ENCODE measurements at regions of chr17 and their contacts with region 1.

Region 1: DNA sequence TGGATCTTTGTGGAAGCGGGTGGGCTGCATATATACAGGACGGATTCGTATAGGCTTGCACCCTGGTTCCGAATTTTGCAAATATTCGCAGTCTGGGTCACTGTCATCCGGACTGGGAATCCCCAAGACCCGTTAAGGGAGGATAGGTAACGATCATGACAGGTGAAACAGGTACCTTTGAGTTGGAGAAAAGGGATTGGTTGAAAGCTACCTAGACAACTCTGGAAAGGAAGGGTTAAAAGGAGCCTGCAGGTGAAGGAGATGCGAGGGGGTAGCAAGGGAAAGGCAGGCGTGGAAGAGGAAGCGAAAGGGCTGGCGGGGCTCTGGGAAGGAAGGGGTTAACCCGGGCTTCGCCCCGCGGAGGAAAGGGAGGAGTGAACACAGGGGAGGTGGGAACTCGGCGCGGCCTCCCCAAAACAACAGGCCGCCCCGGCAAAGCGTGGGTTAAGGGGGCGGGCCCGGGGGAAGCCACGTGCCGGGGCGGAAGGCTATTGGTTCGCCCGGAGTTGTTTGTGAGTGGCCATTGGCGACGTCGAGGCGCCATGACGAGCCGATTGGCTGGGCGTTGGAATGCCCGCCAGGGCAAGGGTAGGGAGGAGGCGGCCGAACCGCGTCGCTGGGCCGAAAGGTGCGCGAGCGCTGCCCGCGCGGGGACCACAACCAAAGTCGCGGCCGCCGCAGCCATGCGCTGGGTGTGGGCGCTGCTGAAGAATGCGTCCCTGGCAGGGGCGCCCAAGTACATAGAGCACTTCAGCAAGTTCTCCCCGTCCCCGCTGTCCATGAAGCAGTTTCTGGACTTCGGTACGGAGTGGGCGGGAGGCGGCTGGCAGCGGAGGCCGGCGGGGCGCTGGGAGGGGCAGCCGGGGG is at the start of gene PDK2:
- DNase-seq: peak; percentile 95 to 96
- ATAC-seq: peak; percentile 79 to 83
- H3K4me3 ChIP-seq: peak within 1 kb of the TSS; percentile 86 to 97 (median 90)
- H3K27ac ChIP-seq: peak within 1 kb of the TSS; percentile 96 to 99 (median 98)
- H3K4me1 ChIP-seq: peaks cover 43 to 47% of the 10 kb centered on the region in 2 donors
- H3K27me3 ChIP-seq: no peaks in the 10 kb centered on the region
- CTCF ChIP-seq: no peak
- POLR2A ChIP-seq: peak; percentile 93 to 95
- total RNA-seq, gene PDK2: 111 to 335 (median 124) TPM

Region 2: GRCh38 chr17:49880291-49881053 is 214.5 kb before region 1 on chr17:
- in situ Hi-C with region 1: no loop called
- intact Hi-C with region 1: no loop called
- DNase-seq: peak; percentile 28 to 44
- ATAC-seq: peak; percentile 64 to 80
- H3K4me3 ChIP-seq: no peak overlapping the region
- H3K27ac ChIP-seq: no peak overlapping the region
- H3K4me1 ChIP-seq: no peaks in the 10 kb centered on the region
- H3K27me3 ChIP-seq: peaks cover 22 to 27% (median 24%) of the 10 kb centered on the region in 3 donors
- CTCF ChIP-seq: peak; percentile 80 to 97 (median 91)
- POLR2A ChIP-seq: no peak

Region 3: GRCh38 chr17:50013079-50013478 is 81.9 kb before region 1 on chr17:
- in situ Hi-C with region 1: no loop called
- intact Hi-C with region 1: no loop called
- DNase-seq: no peak
- ATAC-seq: no peak
- H3K4me3 ChIP-seq: no peak overlapping the region
- H3K27ac ChIP-seq: no peak overlapping the region
- H3K4me1 ChIP-seq: no peaks in the 10 kb centered on the region
- H3K27me3 ChIP-seq: peaks cover 0 to 12% (median 0%) of the 10 kb centered on the region in 3 donors
- CTCF ChIP-seq: no peak
- POLR2A ChIP-seq: no peak

Region 4: GRCh38 chr17:50055426-50056230 is 39.4 kb before region 1 on chr17 and contains the start of gene ITGA3:
- in situ Hi-C with region 1: no loop called
- intact Hi-C with region 1: loop called (anchors 2 kb)
- DNase-seq: peak in 1 of 2 donors; percentile 55
- ATAC-seq: peak; percentile 20 to 25
- H3K4me3 ChIP-seq: peak within 1 kb of the TSS; percentile 71 to 96 (median 82)
- H3K27ac ChIP-seq: peak within 1 kb of the TSS; percentile 86 to 96 (median 92)
- H3K4me1 ChIP-seq: peaks cover 47 to 49% of the 10 kb centered on the region in 2 donors
- H3K27me3 ChIP-seq: no peaks in the 10 kb centered on the region
- CTCF ChIP-seq: no peak
- POLR2A ChIP-seq: peak; percentile 39 to 54
- total RNA-seq, gene ITGA3: 5.1 to 25.9 (median 18.4) TPM

Region 5: DNA sequence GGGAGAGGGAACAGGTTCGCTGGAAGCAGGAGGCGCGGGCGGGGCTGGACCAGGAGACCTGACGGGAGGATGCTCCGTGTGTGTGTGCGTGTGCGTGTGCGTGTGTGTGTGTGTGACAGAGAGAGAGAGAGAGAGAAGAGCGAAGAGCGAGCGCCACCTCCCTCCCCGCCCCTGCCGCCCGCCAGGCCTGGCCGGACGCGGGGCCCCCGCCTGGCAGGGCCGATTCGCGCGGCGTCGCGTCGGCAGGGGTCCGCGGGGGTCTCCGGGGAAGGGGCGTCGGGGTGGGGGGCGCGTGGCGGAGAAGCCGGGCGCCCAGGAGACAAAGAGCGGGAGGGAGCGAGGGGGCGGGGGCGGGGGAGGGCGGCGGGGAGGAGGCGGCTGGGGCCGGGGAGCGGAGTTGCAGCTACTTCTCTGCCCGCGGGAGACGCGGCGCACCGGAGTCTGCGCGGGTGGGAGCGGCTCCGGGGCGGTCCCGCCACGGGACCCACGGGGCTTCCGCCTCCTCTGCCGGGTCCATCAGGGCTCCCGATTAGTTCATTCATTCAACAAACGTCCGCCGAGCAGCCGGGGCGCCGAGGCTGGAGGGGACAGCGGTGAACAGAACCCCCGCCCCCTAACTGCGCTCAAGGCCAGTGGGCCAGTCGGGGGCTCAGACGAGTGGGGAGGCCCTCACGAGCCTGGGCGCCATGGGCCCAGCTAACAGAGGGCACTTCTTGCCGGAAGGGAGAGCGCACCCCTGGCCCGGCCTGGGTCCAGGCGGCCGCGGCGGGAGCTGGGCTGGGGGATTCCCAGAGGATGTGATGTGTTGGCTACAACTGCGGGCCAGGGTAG is 35.0 kb after region 1 on chr17 and contains the start of gene SAMD14:
- in situ Hi-C with region 1: no loop called
- intact Hi-C with region 1: loop called (anchors 2 kb)
- DNase-seq: no peak
- ATAC-seq: no peak
- H3K4me3 ChIP-seq: peak within 1 kb of the TSS; percentile 52 to 64 (median 54)
- H3K27ac ChIP-seq: peak within 1 kb of the TSS; percentile 53 to 95 (median 92)
- H3K4me1 ChIP-seq: peaks cover 30 to 46% of the 10 kb centered on the region in 2 donors
- H3K27me3 ChIP-seq: peaks cover 0 to 4% (median 0%) of the 10 kb centered on the region in 3 donors
- CTCF ChIP-seq: no peak
- POLR2A ChIP-seq: no peak
- total RNA-seq, gene SAMD14: 0.04 to 3.8 (median 0.31) TPM in 3 of 4 donors, not detected in the other

Region 6: GRCh38 chr17:50169121-50169764 is 74.3 kb after region 1 on chr17:
- in situ Hi-C with region 1: loop called in 1 of 4 experiments (anchors 5 kb)
- intact Hi-C with region 1: no loop called
- DNase-seq: no peak
- ATAC-seq: no peak
- H3K4me3 ChIP-seq: no peak overlapping the region
- H3K27ac ChIP-seq: peak overlapping the region; percentile 98 to 100 (median 99)
- H3K4me1 ChIP-seq: peaks cover 70 to 76% of the 10 kb centered on the region in 2 donors
- H3K27me3 ChIP-seq: no peaks in the 10 kb centered on the region
- CTCF ChIP-seq: peak; percentile 57 to 91 (median 80)
- POLR2A ChIP-seq: peak in 1 of 2 donors; percentile 4

Region 7: GRCh38 chr17:50297407-50297865 is 202.4 kb after region 1 on chr17:
- in situ Hi-C with region 1: no loop called
- intact Hi-C with region 1: loop called (anchors 10 kb)
- DNase-seq: peak; percentile 57 to 63
- ATAC-seq: peak; percentile 77 to 87
- H3K4me3 ChIP-seq: no peak overlapping the region
- H3K27ac ChIP-seq: no peak overlapping the region
- H3K4me1 ChIP-seq: no peaks in the 10 kb centered on the region
- H3K27me3 ChIP-seq: peaks cover 0 to 2% (median 0%) of the 10 kb centered on the region in 3 donors
- CTCF ChIP-seq: peak; percentile 82 to 93 (median 91)
- POLR2A ChIP-seq: no peak

Region 8: GRCh38 chr17:50412188-50412732 is 317.3 kb after region 1 on chr17:
- in situ Hi-C with region 1: no loop called
- intact Hi-C with region 1: no loop called
- DNase-seq: no peak
- ATAC-seq: no peak
- H3K4me3 ChIP-seq: no peak overlapping the region
- H3K27ac ChIP-seq: no peak overlapping the region
- H3K4me1 ChIP-seq: no peaks in the 10 kb centered on the region
- H3K27me3 ChIP-seq: no peaks in the 10 kb centered on the region
- CTCF ChIP-seq: no peak
- POLR2A ChIP-seq: no peak